ENCODE measurements at regions of chr13 and their contacts with region 1.

Region 1: GRCh38 chr13:40666045-40666904 is at the start of gene FOXO1:
- DNase-seq: peak; percentile 89 to 98 (median 94)
- ATAC-seq: peak; percentile 87
- H3K4me3 ChIP-seq: peak within 1 kb of the TSS; percentile 84
- H3K4me3 Mint-ChIP-seq: peak within 1 kb of the TSS; percentile 90 to 98 (median 94)
- H3K27ac ChIP-seq: peak within 1 kb of the TSS; percentile 93
- H3K27ac Mint-ChIP-seq: peak within 1 kb of the TSS; percentile 91 to 99 (median 92)
- H3K4me1 ChIP-seq: peaks cover 12 to 19% of the 10 kb centered on the region in 2 donors
- H3K4me1 Mint-ChIP-seq: peaks cover 28 to 51% (median 47%) of the 10 kb centered on the region in 7 donors
- H3K27me3 ChIP-seq: no peaks in the 10 kb centered on the region
- H3K27me3 Mint-ChIP-seq: no peaks in the 10 kb centered on the region
- total RNA-seq, gene FOXO1: 36.4 to 97.6 (median 93.7) TPM

Region 2: GRCh38 chr13:40026174-40026585 is 640.1 kb before region 1 on chr13:
- CTCF ChIA-PET with region 1: no interaction called
- POLR2A ChIA-PET with region 1: no interaction called
- intact Hi-C with region 1: loop called in 1 of 2 experiments (anchors 1 kb)
- DNase-seq: peak in 8 of 9 donors; percentile 8 to 63 (median 32)
- ATAC-seq: peak; percentile 77
- H3K4me3 ChIP-seq: peak overlapping the region; percentile 43
- H3K4me3 Mint-ChIP-seq: peak overlapping the region; percentile 39 to 79 (median 68)
- H3K27ac ChIP-seq: no peak overlapping the region
- H3K27ac Mint-ChIP-seq: peak overlapping the region; percentile 24 to 78 (median 44)
- H3K4me1 ChIP-seq: peaks cover 0 to 10% of the 10 kb centered on the region in 2 donors
- H3K4me1 Mint-ChIP-seq: peaks cover 6 to 34% (median 22%) of the 10 kb centered on the region in 7 donors
- H3K27me3 ChIP-seq: no peaks in the 10 kb centered on the region
- H3K27me3 Mint-ChIP-seq: peaks cover 0 to 35% (median 0%) of the 10 kb centered on the region in 5 donors

Region 3: GRCh38 chr13:40388617-40389016 is 277.7 kb before region 1 on chr13:
- CTCF ChIA-PET with region 1: interaction called, 3 read pairs
- POLR2A ChIA-PET with region 1: interaction called, 5 read pairs
- intact Hi-C with region 1: loop called (anchors 1 kb)
- DNase-seq: peak; percentile 36 to 88 (median 82)
- ATAC-seq: peak; percentile 96
- H3K4me3 ChIP-seq: peak overlapping the region; percentile 80
- H3K4me3 Mint-ChIP-seq: peak overlapping the region; percentile 80 to 95 (median 88)
- H3K27ac ChIP-seq: peak overlapping the region; percentile 78
- H3K27ac Mint-ChIP-seq: peak overlapping the region; percentile 95 to 100 (median 98)
- H3K4me1 ChIP-seq: peaks cover 16 to 23% of the 10 kb centered on the region in 2 donors
- H3K4me1 Mint-ChIP-seq: peaks cover 35 to 76% (median 60%) of the 10 kb centered on the region in 7 donors
- H3K27me3 ChIP-seq: no peaks in the 10 kb centered on the region
- H3K27me3 Mint-ChIP-seq: no peaks in the 10 kb centered on the region

Region 4: GRCh38 chr13:40597740-40598370 is 68.4 kb before region 1 on chr13:
- CTCF ChIA-PET with region 1: no interaction called
- POLR2A ChIA-PET with region 1: interaction called, 6 read pairs
- intact Hi-C with region 1: loop called in 1 of 2 experiments (anchors 2 kb)
- DNase-seq: no peak
- ATAC-seq: no peak
- H3K4me3 ChIP-seq: no peak overlapping the region
- H3K4me3 Mint-ChIP-seq: peak overlapping the region; percentile 23 to 77 (median 64)
- H3K27ac ChIP-seq: no peak overlapping the region
- H3K27ac Mint-ChIP-seq: peak overlapping the region; percentile 54 to 90 (median 83)
- H3K4me1 ChIP-seq: peaks cover 43 to 92% of the 10 kb centered on the region in 2 donors
- H3K4me1 Mint-ChIP-seq: peaks cover 66 to 100% (median 93%) of the 10 kb centered on the region in 7 donors
- H3K27me3 ChIP-seq: no peaks in the 10 kb centered on the region
- H3K27me3 Mint-ChIP-seq: no peaks in the 10 kb centered on the region

Region 5: GRCh38 chr13:40653527-40654318 is 12.6 kb before region 1 on chr13:
- CTCF ChIA-PET with region 1: no interaction called
- POLR2A ChIA-PET with region 1: interaction called, 13 read pairs
- intact Hi-C with region 1: loop called (anchors 1 kb)
- DNase-seq: peak in 3 of 9 donors; percentile 22 to 42 (median 22)
- ATAC-seq: peak; percentile 44
- H3K4me3 ChIP-seq: no peak overlapping the region
- H3K4me3 Mint-ChIP-seq: peak overlapping the region; percentile 54 to 98 (median 72)
- H3K27ac ChIP-seq: peak overlapping the region; percentile 43
- H3K27ac Mint-ChIP-seq: peak overlapping the region; percentile 18 to 92 (median 82)
- H3K4me1 ChIP-seq: peaks cover 42 to 82% of the 10 kb centered on the region in 2 donors
- H3K4me1 Mint-ChIP-seq: peaks cover 73 to 100% (median 95%) of the 10 kb centered on the region in 7 donors
- H3K27me3 ChIP-seq: no peaks in the 10 kb centered on the region
- H3K27me3 Mint-ChIP-seq: no peaks in the 10 kb centered on the region

Region 6: DNA sequence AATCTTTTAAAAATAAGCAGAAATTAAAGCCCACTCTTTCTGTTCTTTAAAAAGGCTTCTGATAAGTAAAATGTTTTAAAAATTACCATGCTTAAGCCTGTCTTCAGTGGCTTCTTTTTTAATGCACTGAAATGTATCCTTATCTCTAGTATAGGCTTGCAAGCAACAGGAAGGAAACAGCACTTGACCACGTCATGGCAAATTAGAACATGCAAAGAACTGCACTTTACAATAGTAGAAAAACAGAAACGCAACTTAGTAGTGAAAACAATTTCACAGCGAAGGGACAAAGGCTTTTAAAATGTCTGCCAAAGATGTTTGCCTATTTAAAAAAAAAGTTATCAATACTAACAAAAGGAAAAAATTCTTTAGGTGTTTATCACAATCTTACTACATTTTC is 316.5 kb after region 1 on chr13:
- CTCF ChIA-PET with region 1: no interaction called
- POLR2A ChIA-PET with region 1: interaction called, 3 read pairs
- intact Hi-C with region 1: loop called (anchors 5 kb)
- DNase-seq: peak in 8 of 9 donors; percentile 41 to 90 (median 80)
- ATAC-seq: peak; percentile 82
- H3K4me3 ChIP-seq: no peak overlapping the region
- H3K4me3 Mint-ChIP-seq: peak overlapping the region; percentile 76 to 99 (median 94)
- H3K27ac ChIP-seq: peak overlapping the region; percentile 86
- H3K27ac Mint-ChIP-seq: peak overlapping the region; percentile 93 to 98 (median 96)
- H3K4me1 ChIP-seq: peaks cover 30 to 34% of the 10 kb centered on the region in 2 donors
- H3K4me1 Mint-ChIP-seq: peaks cover 40 to 77% (median 65%) of the 10 kb centered on the region in 7 donors
- H3K27me3 ChIP-seq: no peaks in the 10 kb centered on the region
- H3K27me3 Mint-ChIP-seq: no peaks in the 10 kb centered on the region

Region 7: GRCh38 chr13:41107104-41107571 is 440.9 kb after region 1 on chr13:
- CTCF ChIA-PET with region 1: no interaction called
- POLR2A ChIA-PET with region 1: no interaction called
- intact Hi-C with region 1: no loop called
- DNase-seq: no peak
- ATAC-seq: no peak
- H3K4me3 ChIP-seq: no peak overlapping the region
- H3K4me3 Mint-ChIP-seq: no peak overlapping the region
- H3K27ac ChIP-seq: no peak overlapping the region
- H3K27ac Mint-ChIP-seq: no peak overlapping the region
- H3K4me1 ChIP-seq: no peaks in the 10 kb centered on the region
- H3K4me1 Mint-ChIP-seq: peaks cover 0 to 1% (median 0%) of the 10 kb centered on the region in 7 donors
- H3K27me3 ChIP-seq: no peaks in the 10 kb centered on the region
- H3K27me3 Mint-ChIP-seq: peaks cover 0 to 2% (median 0%) of the 10 kb centered on the region in 5 donors

Measured in naive thymus-derived CD4-positive, alpha-beta T cell (primary cell).